ENCODE measurements at regions of chr9 and their contacts with region 1.

Region 1: GRCh38 chr9:98255578-98256296 is at the start of gene TBC1D2:
- H3K4me3 ChIP-seq: peak within 1 kb of the TSS; percentile 88
- H3K27ac ChIP-seq: peak within 1 kb of the TSS; percentile 76
- H3K4me1 ChIP-seq: no peaks in the 10 kb centered on the region
- CTCF ChIP-seq: peak; percentile 79

Region 2: GRCh38 chr9:98207606-98208005 is 48.1 kb before region 1 on chr9:
- CTCF ChIA-PET with region 1: interaction called, 25 read pairs
- POLR2A ChIA-PET with region 1: no interaction called
- H3K4me3 ChIP-seq: no peak overlapping the region
- H3K27ac ChIP-seq: no peak overlapping the region
- H3K4me1 ChIP-seq: no peaks in the 10 kb centered on the region
- CTCF ChIP-seq: no peak

Region 3: DNA sequence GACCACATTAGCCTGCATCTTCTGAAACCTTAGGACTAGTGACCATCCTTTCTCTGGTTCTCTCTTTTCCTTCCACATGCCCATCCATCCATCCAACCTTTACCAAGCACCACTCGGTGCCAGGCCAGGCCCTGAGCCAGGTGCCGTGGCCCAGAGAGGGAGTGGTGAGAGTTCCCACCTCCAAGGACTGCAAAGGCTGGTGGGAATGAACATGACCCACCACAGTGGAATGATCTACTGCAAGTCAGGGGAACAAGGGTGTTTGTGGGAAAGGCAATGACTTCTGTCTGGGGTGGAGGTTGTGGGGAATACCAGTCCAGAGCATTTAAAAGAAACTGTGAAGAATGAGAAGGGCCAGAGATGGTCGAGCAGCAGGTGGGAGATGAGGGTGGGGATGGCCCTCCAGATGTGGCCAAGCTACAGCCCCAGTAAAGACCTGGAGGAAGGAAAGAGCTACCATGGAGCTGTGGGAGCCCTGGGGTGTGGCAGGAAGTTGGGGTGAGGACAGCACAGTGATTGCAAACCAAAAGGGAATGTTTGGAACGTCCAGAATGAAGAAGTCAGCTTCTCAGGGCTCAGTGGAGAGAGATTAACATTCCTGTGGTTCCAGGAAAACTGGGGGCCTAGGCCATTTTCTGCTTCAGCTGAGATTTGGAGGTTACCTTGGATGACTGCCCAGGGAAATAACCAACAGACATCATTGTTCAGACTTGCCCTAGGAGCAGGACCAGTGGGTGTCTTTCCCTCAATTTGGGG is 32.7 kb before region 1 on chr9:
- CTCF ChIA-PET with region 1: interaction called, 5 read pairs
- POLR2A ChIA-PET with region 1: interaction called, 10 read pairs
- H3K4me3 ChIP-seq: no peak overlapping the region
- H3K27ac ChIP-seq: no peak overlapping the region
- H3K4me1 ChIP-seq: no peaks in the 10 kb centered on the region
- CTCF ChIP-seq: no peak

Region 4: GRCh38 chr9:98231770-98232478 is 23.8 kb before region 1 on chr9:
- CTCF ChIA-PET with region 1: interaction called, 17 read pairs
- POLR2A ChIA-PET with region 1: interaction called, 5 read pairs
- H3K4me3 ChIP-seq: no peak overlapping the region
- H3K27ac ChIP-seq: no peak overlapping the region
- H3K4me1 ChIP-seq: no peaks in the 10 kb centered on the region
- CTCF ChIP-seq: no peak

Region 5: DNA sequence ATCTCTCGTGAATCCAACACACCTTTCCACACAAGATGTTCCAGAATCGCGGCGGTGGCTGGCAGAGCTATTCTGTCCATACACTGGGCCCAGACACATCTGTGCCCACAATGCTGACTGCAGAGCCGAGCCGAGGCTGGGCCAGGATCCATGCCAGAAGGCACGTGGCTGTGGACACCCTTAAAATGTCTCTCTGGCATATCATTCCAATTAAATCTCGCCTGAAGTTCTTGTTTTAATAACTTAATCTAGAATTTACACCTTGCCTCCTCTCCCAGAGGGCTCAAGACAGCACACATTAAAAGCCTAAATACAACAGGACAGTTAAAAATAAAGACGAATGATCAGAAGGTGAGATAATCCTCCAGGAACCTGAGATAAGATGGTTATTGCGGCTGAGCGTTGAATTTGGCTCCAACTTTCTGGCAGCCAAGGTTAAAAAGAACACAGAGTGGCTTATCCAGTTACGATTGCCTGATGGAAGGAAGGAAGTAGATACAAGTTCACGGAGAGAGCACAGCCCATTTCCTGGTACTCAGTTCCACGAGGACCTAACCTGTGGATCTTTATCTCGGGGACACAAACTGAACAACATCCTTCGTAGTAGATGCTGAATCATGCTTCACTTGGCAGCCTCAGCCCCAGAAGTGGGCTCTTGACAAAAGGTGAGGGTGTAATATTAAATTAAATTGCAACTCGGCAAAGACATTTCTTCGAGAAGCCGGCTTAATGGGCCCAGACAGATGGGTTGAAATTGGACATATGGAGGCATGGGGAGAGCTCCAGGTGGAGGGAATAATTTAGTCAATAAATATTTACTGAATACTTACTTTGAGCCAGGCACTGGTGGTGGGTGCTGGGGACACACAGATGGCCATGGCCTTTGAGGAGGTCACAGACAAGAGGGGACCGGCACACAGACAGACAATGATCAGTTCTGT is 85.7 kb after region 1 on chr9:
- CTCF ChIA-PET with region 1: no interaction called
- POLR2A ChIA-PET with region 1: no interaction called
- H3K4me3 ChIP-seq: no peak overlapping the region
- H3K27ac ChIP-seq: no peak overlapping the region
- H3K4me1 ChIP-seq: no peaks in the 10 kb centered on the region
- CTCF ChIP-seq: no peak

Measured in HEK293 (cell line).